ENCODE measurements at regions of chr6 and their contacts with region 1.

Region 1: DNA sequence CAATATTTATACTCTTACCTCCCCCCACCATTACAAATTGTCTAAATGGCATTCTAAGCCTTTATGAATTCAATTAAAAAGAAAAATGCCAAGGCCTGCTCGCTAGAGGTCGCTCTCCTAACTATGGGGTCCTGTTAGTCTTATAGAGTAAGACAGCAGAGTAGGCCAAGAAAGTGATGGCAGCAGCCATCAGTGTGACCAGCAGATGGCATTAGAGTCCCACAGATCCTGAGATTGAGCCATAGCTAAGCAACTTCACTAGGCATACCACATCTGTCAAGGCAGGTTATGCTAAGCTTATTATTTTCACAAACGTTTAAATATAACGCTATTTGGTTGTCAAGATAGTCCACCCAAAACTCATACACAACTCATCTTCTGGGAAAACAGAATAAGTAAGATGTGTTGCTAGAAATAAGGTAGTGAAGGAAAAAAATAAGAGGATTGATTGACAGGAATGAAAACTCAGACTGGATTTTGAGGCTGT is 57.6 kb upstream of the SCAF8 start:
- DNase-seq: peak; percentile 93
- H3K4me3 Mint-ChIP-seq: no peak overlapping the region
- H3K27ac Mint-ChIP-seq: no peak overlapping the region
- H3K4me1 Mint-ChIP-seq: no peaks in the 10 kb centered on the region
- H3K27me3 Mint-ChIP-seq: no peaks in the 10 kb centered on the region

Region 2: GRCh38 chr6:154733012-154733625 is 57.5 kb after region 1 on chr6 and contains the start of gene SCAF8:
- CTCF ChIA-PET with region 1: interaction called, 7 read pairs
- POLR2A ChIA-PET with region 1: no interaction called
- intact Hi-C with region 1: loop called (anchors 1 kb)
- DNase-seq: peak; percentile 86
- H3K4me3 Mint-ChIP-seq: peak within 1 kb of the TSS; percentile 85
- H3K27ac Mint-ChIP-seq: peak within 1 kb of the TSS; percentile 84
- H3K4me1 Mint-ChIP-seq: peaks cover 34% of the 10 kb centered on the region
- H3K27me3 Mint-ChIP-seq: no peaks in the 10 kb centered on the region
- total RNA-seq, gene SCAF8: 30.1 to 31.7 TPM

Region 3: GRCh38 chr6:154805288-154805911 is 129.8 kb after region 1 on chr6:
- CTCF ChIA-PET with region 1: interaction called, 212 read pairs
- POLR2A ChIA-PET with region 1: no interaction called
- intact Hi-C with region 1: loop called (anchors 1 kb)
- DNase-seq: no peak
- H3K4me3 Mint-ChIP-seq: no peak overlapping the region
- H3K27ac Mint-ChIP-seq: no peak overlapping the region
- H3K4me1 Mint-ChIP-seq: peaks cover 3% of the 10 kb centered on the region
- H3K27me3 Mint-ChIP-seq: no peaks in the 10 kb centered on the region

Region 4: DNA sequence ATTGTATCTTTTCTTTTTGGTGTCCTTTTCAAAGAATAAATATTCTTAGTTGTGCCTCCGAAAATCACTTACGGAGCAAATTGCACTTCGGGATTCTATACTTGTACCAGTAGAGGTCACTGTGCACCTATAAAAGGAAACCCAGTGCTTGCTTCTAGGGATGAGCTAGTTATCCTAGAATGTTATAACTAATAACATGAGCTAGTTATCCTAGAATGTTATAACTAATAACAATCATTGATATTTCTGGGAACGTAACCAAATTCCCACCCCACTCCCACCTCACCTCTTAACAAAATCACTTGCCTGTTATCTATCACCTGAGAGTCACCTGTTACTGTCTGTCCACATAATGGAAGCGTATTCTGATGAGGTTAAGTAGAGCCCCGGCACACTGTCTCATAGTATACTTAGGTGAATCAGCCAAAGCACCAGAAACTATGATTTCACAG is 192.5 kb after region 1 on chr6:
- CTCF ChIA-PET with region 1: interaction called, 4 read pairs
- POLR2A ChIA-PET with region 1: no interaction called
- intact Hi-C with region 1: loop called (anchors 2 kb)
- DNase-seq: no peak
- H3K4me3 Mint-ChIP-seq: no peak overlapping the region
- H3K27ac Mint-ChIP-seq: no peak overlapping the region
- H3K4me1 Mint-ChIP-seq: peaks cover 15% of the 10 kb centered on the region
- H3K27me3 Mint-ChIP-seq: no peaks in the 10 kb centered on the region

Region 5: DNA sequence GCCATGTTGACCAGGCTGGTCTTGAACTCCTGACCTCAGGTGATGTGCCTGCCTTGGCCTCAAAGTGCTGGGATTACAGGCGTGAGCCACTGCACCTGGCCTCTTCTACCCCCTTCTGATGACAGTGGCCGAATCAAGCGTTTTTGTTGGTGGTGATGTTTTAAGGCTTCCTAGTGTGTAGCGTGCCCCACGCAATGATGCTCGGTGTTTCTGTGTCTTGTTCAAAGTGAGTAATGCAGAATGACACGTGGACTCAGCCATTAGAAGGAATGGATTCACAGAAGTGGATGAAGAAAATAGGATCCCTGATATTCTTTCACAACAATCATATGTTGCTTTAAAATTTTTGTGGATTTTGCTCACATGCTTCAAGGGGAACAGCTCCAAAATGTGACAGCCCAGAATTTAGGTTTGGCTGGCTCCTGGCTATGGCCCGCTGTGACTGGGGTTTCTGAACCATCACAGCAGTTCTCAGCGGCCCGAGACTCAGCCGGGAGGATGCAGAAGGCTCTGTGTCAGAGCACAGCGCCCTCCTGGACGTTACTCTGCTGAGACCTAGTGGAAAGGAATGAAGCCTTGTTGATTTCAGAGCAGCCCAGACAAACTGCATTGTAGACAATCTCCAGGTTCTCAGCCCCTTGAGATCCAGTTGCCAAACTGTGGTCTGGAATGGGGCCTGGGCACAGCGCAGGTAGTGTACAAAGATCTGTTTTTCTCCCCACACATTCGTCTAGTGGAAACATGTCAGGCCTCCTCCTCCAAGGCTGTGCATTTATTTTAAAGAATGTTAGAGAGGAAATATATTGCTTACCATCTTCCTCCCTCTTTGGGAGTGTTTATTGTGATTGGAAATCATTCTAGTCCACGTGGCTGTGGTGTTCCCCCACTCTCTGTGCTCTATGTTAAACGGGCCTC is 261.9 kb after region 1 on chr6:
- CTCF ChIA-PET with region 1: no interaction called
- POLR2A ChIA-PET with region 1: no interaction called
- intact Hi-C with region 1: no loop called
- DNase-seq: no peak
- H3K4me3 Mint-ChIP-seq: no peak overlapping the region
- H3K27ac Mint-ChIP-seq: no peak overlapping the region
- H3K4me1 Mint-ChIP-seq: peaks cover 3% of the 10 kb centered on the region
- H3K27me3 Mint-ChIP-seq: no peaks in the 10 kb centered on the region